ENCODE measurements at regions of chr3 and their contacts with region 1.

Region 1: DNA sequence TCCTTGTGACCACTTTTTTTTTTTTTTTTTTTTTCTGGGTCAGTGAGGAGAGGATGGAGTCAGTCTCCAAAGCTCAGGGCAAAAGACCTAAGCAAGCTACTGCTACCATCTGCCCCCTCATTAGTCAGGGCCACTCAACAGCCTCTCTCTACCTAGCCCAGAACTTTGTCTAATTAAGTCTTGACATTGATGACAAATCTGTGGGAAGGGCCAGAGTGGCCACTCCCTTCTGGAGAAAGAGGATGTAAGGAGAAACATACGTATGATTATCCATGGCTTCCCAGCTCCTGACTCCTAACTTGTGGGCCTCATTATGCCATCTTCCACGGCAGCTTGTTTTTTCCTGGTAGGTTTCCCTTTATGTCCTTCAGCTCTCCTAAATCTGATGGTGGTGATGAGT is 37.9 kb downstream of the NR1I2 start:
- DNase-seq: peak; percentile 14
- H3K4me3 Mint-ChIP-seq: no peak overlapping the region
- H3K27ac Mint-ChIP-seq: no peak overlapping the region
- H3K4me1 Mint-ChIP-seq: no peaks in the 10 kb centered on the region
- H3K27me3 Mint-ChIP-seq: peaks cover 6% of the 10 kb centered on the region
- CTCF ChIP-seq: no peak

Region 2: GRCh38 chr3:120182724-120183524 is 363.1 kb after region 1 on chr3:
- CTCF ChIA-PET with region 1: no interaction called
- POLR2A ChIA-PET with region 1: no interaction called
- intact Hi-C with region 1: loop called (anchors 5 kb)
- DNase-seq: peak; percentile 80
- H3K4me3 Mint-ChIP-seq: no peak overlapping the region
- H3K27ac Mint-ChIP-seq: peak overlapping the region; percentile 83
- H3K4me1 Mint-ChIP-seq: peaks cover 27% of the 10 kb centered on the region
- H3K27me3 Mint-ChIP-seq: no peaks in the 10 kb centered on the region
- CTCF ChIP-seq: peak; percentile 42

Region 3: GRCh38 chr3:120198305-120198878 is 378.6 kb after region 1 on chr3:
- CTCF ChIA-PET with region 1: no interaction called
- POLR2A ChIA-PET with region 1: no interaction called
- intact Hi-C with region 1: loop called (anchors 1 kb)
- DNase-seq: peak; percentile 55
- H3K4me3 Mint-ChIP-seq: no peak overlapping the region
- H3K27ac Mint-ChIP-seq: no peak overlapping the region
- H3K4me1 Mint-ChIP-seq: peaks cover 6% of the 10 kb centered on the region
- H3K27me3 Mint-ChIP-seq: no peaks in the 10 kb centered on the region
- CTCF ChIP-seq: peak; percentile 41

Measured in MCF 10A (cell line).